Astrocyte of the cerebellum (primary cell): ENCODE measurements at regions of chr17 and their contacts with region 1.

Region 1: DNA sequence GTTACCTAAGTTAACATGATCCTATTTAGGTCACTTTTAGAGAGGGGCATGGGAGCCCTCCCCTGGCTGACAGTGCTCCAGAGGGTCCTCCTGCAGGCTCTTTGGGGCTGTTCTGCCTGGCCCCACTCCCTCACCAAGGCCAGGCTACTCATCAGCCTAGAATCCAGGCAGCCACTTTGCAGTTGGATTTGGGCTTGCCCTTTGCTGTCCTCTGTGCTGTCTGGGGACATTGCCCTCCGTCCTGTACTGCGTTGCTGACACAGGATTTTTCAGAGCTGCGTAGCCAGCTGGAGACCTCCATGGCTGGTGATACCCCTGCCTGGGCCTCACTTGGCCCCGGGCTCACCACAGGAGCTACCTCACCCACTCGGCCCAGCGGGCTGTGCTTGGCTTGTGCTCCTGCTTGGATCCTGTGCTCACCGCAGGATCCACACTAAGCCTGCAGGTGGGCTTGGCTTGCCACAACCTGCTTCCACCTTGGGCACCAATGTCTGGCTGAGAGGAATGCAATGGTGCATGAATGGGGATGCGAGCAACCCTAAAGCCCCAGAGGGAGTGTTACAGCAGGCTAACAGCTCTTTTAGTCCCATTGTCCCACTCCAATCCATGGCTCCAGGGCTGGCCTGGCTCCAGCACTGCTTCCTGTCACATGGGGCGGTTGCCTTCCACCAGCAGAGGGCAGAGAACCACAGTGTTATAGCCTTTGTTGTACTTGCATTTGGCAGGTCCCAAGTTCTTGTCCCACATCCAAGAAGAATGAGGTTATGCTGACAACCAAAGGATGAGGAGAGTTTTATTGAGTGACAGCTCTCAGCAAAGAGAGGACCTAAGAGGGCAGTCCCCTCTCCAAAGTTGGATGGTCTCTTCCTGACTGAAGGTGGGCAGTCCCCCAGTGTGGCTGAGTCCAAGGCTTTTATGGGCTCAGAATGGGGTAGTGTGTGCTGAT is 21.5 kb downstream of the CCL4 start:
- DNase-seq: no peak
- H3K4me3 ChIP-seq: no peak overlapping the region
- CTCF ChIP-seq: no peak

Region 2: DNA sequence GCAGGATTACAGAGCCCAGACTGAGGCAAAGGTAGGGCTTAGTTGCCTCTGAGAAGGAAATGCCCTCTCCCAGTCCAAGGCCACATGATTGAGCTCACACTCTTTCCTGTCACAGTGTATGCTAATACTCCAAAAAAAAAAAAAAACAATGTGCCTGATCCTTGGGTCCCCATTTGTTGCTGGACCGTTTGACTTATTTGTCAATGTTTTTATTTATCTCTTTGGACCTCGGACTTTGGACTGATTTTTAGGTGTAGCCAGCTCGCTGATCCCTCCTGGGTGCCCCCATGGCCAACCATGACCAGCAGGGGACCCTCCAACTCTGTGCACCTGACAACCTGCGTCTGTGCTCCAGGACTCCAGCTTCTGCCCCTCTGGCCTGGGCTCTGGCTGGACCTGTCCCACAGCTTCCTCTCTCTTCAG is 143.2 kb before region 1 on chr17:
- in situ Hi-C with region 1: loop called (anchors 25 kb)
- DNase-seq: no peak
- H3K4me3 ChIP-seq: no peak overlapping the region
- CTCF ChIP-seq: no peak

Region 3: DNA sequence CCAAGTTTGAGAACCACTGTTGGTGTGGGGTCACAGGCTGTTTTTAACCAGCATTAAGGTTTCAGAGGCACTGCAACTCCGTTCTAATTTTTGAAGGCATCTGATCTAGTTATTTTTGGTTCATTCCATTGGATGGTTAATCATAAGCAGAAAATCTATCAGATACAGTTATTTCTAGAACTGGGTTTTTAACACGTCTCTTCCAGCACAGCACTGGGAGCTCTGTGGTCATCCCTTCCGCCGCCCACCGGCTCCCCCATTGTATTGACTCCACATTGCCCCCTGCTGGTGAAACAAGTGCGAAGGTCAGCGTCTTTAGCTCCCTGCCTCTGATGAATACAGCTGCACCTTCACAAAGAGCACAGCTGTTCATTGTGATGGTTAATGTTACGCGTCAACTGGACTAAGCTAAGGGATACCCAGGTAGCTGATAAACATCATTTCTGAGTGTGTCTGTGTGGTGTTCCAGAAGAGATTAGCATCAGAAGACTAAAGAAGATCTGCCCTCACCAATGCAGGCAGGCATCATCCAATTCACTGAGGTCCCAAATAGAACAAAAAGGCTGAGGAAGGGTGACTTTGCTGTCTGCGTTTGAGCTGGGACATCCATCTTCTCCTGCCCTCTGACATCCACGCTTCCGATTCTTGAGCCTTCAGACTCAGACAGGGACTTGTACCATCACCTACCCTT is 52.6 kb before region 1 on chr17:
- in situ Hi-C with region 1: no loop called
- DNase-seq: no peak
- H3K4me3 ChIP-seq: no peak overlapping the region
- CTCF ChIP-seq: peak; percentile 43

Region 4: GRCh38 chr17:36205637-36206485 is 80.7 kb after region 1 on chr17:
- in situ Hi-C with region 1: loop called (anchors 25 kb)
- DNase-seq: no peak
- H3K4me3 ChIP-seq: no peak overlapping the region
- CTCF ChIP-seq: no peak